ENCODE measurements at regions of chr1 and their contacts with region 1.

Region 1: DNA sequence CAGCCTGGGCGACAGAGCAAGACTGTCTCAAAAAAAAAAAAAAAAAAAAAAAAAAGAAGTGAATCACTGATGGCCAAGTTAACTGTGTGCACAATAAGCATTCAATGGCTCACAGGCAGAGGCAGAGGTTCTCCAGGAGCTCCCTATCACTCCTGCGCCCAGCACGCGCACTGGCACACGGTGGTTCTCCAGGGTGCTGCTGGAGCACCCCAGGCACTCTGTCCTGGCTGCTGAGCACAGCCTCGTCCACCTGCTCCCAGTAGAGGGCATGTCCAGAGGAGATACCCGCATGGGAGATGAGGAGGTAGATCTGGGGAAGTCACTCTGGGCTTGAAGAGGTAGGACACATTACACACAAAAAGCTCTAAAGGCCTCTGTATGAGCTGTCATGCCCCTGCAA is 21.5 kb upstream of the NUP133 start:
- DNase-seq: no peak
- ATAC-seq: no peak
- H3K4me3 ChIP-seq: no peak overlapping the region
- H3K4me3 Mint-ChIP-seq: no peak overlapping the region
- H3K27ac ChIP-seq: no peak overlapping the region
- H3K27ac Mint-ChIP-seq: no peak overlapping the region
- H3K4me1 ChIP-seq: no peaks in the 10 kb centered on the region
- H3K4me1 Mint-ChIP-seq: no peaks in the 10 kb centered on the region
- H3K27me3 ChIP-seq: no peaks in the 10 kb centered on the region
- H3K27me3 Mint-ChIP-seq: no peaks in the 10 kb centered on the region
- CTCF ChIP-seq: no peak

Region 2: GRCh38 chr1:229514578-229515275 is 14.9 kb before region 1 on chr1:
- CTCF ChIA-PET with region 1: interaction called, 15 read pairs
- POLR2A ChIA-PET with region 1: no interaction called
- intact Hi-C with region 1: no loop called
- DNase-seq: peak; percentile 30 to 84 (median 66)
- ATAC-seq: peak; percentile 98
- H3K4me3 ChIP-seq: no peak overlapping the region
- H3K4me3 Mint-ChIP-seq: no peak overlapping the region
- H3K27ac ChIP-seq: no peak overlapping the region
- H3K27ac Mint-ChIP-seq: no peak overlapping the region
- H3K4me1 ChIP-seq: no peaks in the 10 kb centered on the region
- H3K4me1 Mint-ChIP-seq: peaks cover 5% of the 10 kb centered on the region
- H3K27me3 ChIP-seq: no peaks in the 10 kb centered on the region
- H3K27me3 Mint-ChIP-seq: no peaks in the 10 kb centered on the region
- CTCF ChIP-seq: peak; percentile 89

Region 3: DNA sequence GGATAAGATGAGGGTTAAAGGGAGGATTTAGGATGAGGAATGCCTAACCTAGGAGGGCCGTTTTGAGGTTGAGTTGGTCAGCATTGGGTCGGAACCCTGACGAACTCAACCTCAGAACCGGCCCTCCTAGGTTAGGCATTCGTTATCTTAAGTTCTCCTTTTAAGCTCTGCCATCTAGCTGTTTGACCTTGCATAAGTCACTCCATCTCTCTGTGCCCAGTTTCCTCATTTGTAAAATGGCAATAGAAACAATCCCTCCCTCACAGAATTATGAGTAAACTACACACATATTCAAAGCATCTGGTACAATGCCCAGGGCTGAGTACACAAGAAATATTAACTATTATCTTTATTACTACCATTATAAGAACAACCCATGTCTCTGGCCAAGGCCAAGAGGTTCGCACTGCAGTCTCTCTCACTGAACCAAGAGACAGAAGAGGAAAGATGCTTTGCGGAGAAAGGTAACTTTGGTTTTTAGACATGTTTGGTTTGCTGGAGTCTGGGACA is 24.0 kb after region 1 on chr1:
- CTCF ChIA-PET with region 1: no interaction called
- POLR2A ChIA-PET with region 1: no interaction called
- intact Hi-C with region 1: no loop called
- DNase-seq: no peak
- ATAC-seq: no peak
- H3K4me3 ChIP-seq: no peak overlapping the region
- H3K4me3 Mint-ChIP-seq: no peak overlapping the region
- H3K27ac ChIP-seq: no peak overlapping the region
- H3K27ac Mint-ChIP-seq: no peak overlapping the region
- H3K4me1 ChIP-seq: peaks cover 12% of the 10 kb centered on the region
- H3K4me1 Mint-ChIP-seq: peaks cover 47% of the 10 kb centered on the region
- H3K27me3 ChIP-seq: no peaks in the 10 kb centered on the region
- H3K27me3 Mint-ChIP-seq: no peaks in the 10 kb centered on the region
- CTCF ChIP-seq: no peak

Measured in CD8-positive, alpha-beta T cell (primary cell).